ENCODE measurements at regions of chr3 and their contacts with region 1.

Region 1: GRCh38 chr3:170908235-170909116 is at the start of gene EIF5A2:
- DNase-seq: peak; percentile 98 to 99
- ATAC-seq: peak; percentile 97
- H3K4me3 ChIP-seq: peak within 1 kb of the TSS; percentile 23 to 97
- H3K27ac ChIP-seq: peak within 1 kb of the TSS in 1 of 2 donors; percentile 21
- H3K4me1 ChIP-seq: no peaks in the 10 kb centered on the region
- H3K27me3 ChIP-seq: no peaks in the 10 kb centered on the region
- total RNA-seq, gene EIF5A2: 17.1 to 17.7 TPM

Region 2: GRCh38 chr3:170869645-170870593 is 38.6 kb before region 1 on chr3 and contains the start of gene RPL22L1:
- intact Hi-C with region 1: loop called in 1 of 2 experiments (anchors 5 kb)
- DNase-seq: peak; percentile 97 to 98
- ATAC-seq: peak; percentile 98
- H3K4me3 ChIP-seq: peak within 1 kb of the TSS; percentile 42 to 77
- H3K27ac ChIP-seq: peak within 1 kb of the TSS in 1 of 2 donors; percentile 19
- H3K4me1 ChIP-seq: peaks cover 0 to 2% of the 10 kb centered on the region in 2 donors
- H3K27me3 ChIP-seq: no peaks in the 10 kb centered on the region
- total RNA-seq, gene RPL22L1: 33.5 to 48.9 TPM

Region 3: DNA sequence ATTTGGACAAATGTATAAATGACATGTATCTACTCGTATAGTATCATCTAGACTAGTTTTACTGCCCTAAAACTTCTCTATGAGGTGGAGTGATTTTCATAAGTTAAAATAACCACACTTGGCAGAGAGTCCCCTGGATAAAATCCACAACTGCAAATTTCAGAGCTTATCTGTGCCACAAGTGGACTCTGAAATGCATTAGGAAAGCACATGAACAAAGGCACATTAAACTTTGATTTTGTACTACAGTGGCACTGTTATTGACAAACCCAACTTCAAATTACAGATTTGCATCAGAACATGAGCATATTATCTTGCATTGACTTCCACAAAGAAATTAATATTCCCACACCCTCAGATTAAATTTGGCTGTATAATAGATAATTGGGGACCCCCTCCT is 58.0 kb after region 1 on chr3:
- intact Hi-C with region 1: no loop called
- DNase-seq: no peak
- ATAC-seq: no peak
- H3K4me3 ChIP-seq: no peak overlapping the region
- H3K27ac ChIP-seq: no peak overlapping the region
- H3K4me1 ChIP-seq: no peaks in the 10 kb centered on the region
- H3K27me3 ChIP-seq: no peaks in the 10 kb centered on the region